ENCODE measurements at regions of chr15 and their contacts with region 1.

Region 1: DNA sequence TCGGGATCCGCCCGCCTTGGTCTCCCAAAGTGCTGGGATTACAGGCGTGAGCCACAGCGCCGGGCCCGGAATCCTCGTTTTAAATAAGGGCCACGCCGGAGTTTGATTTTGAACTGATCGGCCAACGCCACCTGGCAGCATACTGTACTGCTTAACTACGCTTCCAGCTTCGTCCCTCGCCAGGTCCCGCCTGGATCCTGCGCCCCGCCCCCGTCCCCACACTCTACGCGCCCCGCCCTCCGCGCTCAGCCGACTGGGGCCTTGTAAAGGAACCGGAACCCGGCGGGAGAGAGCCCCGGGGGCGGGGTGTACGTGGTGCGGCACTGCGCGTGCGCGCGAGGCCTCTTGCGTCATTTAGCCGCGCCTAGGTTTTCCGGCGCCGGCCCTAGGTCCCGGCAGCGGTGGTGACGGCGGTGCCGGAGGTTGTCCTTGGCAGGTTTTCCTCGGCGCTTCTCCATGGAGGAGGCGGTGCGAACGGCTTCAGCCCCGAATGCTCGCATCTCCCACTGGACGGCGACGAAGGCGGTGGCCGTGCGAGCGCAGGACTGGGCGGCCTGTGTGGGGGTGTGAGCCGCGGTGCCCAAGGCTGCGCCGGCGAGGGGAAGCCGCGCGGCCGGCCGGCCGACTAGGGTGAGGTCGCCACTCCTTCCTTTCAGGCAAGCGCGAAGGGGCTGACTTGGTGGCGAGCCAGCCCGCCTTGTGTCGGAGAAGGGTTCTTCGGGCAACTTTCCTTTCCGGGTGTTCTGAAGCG is at the start of gene NIPA2:
- DNase-seq: peak; percentile 99
- H3K4me3 Mint-ChIP-seq: peak within 1 kb of the TSS; percentile 96
- H3K27ac Mint-ChIP-seq: peak within 1 kb of the TSS; percentile 97
- H3K4me1 Mint-ChIP-seq: peaks cover 19% of the 10 kb centered on the region
- H3K27me3 Mint-ChIP-seq: no peaks in the 10 kb centered on the region
- total RNA-seq, gene NIPA2: 70.5 TPM

Region 2: DNA sequence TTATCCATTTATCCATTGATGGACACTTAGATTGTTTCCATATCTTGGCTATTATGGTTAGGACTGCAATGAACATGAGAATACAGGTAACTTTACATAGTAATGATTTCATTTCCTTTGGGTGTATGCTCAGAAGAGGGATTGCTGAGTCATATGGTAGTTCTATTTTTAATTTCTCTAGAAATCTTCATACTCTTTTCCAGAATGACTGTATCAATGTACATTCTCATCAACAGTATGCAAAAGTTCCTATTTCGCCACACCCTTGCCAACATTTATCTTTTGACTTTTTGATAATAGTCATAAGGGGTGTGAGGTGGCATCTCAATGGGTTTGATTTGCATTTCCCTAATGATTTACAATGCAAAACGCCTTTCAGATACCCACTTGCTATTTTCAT is 58.2 kb before region 1 on chr15:
- CTCF ChIA-PET with region 1: no interaction called
- POLR2A ChIA-PET with region 1: no interaction called
- intact Hi-C with region 1: loop called (anchors 1 kb)
- DNase-seq: no peak
- H3K4me3 Mint-ChIP-seq: no peak overlapping the region
- H3K27ac Mint-ChIP-seq: peak overlapping the region; percentile 38
- H3K4me1 Mint-ChIP-seq: peaks cover 40% of the 10 kb centered on the region
- H3K27me3 Mint-ChIP-seq: no peaks in the 10 kb centered on the region

Region 3: GRCh38 chr15:22786868-22787698 is 51.4 kb before region 1 on chr15:
- CTCF ChIA-PET with region 1: no interaction called
- POLR2A ChIA-PET with region 1: interaction called, 3 read pairs
- intact Hi-C with region 1: loop called (anchors 1 kb)
- DNase-seq: peak; percentile 25
- H3K4me3 Mint-ChIP-seq: peak overlapping the region; percentile 81
- H3K27ac Mint-ChIP-seq: peak overlapping the region; percentile 69
- H3K4me1 Mint-ChIP-seq: peaks cover 40% of the 10 kb centered on the region
- H3K27me3 Mint-ChIP-seq: no peaks in the 10 kb centered on the region

Region 4: DNA sequence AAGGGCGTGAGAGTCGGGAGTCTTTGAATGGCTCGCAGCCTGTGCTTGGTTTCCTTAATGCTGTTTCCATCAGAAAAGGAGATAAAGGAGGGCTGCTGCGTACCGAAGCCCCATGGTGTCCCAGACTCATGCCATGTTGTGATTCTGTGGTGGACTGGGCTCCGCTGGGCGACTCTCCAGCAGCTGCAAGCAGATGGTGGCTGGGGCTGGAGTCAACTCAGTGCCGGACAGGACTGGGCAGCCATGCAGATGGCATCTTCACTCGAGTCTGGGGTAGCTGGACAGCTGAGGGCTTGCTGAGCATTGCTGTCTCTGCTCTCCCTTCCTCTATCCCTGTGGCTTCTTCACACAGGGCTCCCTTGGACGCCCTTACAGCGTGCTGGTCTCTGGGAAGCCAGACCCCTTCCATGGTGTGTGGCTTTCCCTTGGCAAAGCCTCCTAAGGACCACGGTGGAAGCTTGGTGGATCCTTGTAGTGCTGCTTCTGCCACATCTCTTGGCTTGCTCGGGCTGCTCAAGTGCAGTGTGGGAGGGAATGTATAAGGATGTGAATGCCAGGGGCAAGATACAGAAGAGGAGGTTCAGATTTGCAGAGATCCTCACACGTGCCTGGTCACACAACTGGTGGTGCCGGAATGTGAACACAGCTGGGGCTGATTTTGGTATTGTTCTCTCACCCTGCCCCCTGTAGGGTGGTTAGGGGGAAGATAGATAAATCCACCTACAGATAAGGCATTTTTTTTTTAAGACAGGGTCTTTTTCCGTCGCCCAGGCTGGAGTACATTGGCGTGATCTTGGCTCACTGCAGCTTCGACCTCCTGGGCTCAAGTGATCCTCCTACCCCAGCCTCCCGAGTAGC is 43.0 kb before region 1 on chr15:
- CTCF ChIA-PET with region 1: no interaction called
- POLR2A ChIA-PET with region 1: interaction called, 4 read pairs
- intact Hi-C with region 1: loop called (anchors 1 kb)
- DNase-seq: no peak
- H3K4me3 Mint-ChIP-seq: no peak overlapping the region
- H3K27ac Mint-ChIP-seq: peak overlapping the region; percentile 58
- H3K4me1 Mint-ChIP-seq: peaks cover 56% of the 10 kb centered on the region
- H3K27me3 Mint-ChIP-seq: no peaks in the 10 kb centered on the region

Region 5: DNA sequence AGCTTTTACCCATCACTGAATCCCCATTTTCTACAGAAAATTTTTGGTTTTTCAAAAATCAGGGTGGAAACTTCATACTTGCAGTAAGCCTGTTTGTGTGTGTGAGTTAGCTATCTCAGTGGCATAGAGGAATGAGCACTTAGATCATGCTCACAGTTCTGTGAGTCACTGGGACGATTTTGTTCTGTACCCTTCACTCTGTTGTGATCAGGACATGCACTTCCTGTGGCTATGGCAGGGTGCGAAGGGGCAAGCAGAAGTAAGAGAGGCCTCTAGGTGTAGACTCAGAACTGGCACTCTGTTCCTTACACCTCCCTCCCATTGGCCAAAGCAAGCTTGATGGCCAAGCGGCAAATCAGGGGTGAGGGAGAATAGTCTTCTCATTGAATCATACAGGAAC is 11.6 kb after region 1 on chr15:
- CTCF ChIA-PET with region 1: no interaction called
- POLR2A ChIA-PET with region 1: no interaction called
- intact Hi-C with region 1: loop called (anchors 1 kb)
- DNase-seq: peak; percentile 30
- H3K4me3 Mint-ChIP-seq: no peak overlapping the region
- H3K27ac Mint-ChIP-seq: peak overlapping the region; percentile 38
- H3K4me1 Mint-ChIP-seq: peaks cover 42% of the 10 kb centered on the region
- H3K27me3 Mint-ChIP-seq: no peaks in the 10 kb centered on the region

Region 6: GRCh38 chr15:22989576-22990477 is 151.4 kb after region 1 on chr15:
- CTCF ChIA-PET with region 1: no interaction called
- POLR2A ChIA-PET with region 1: no interaction called
- intact Hi-C with region 1: no loop called
- DNase-seq: no peak
- H3K4me3 Mint-ChIP-seq: no peak overlapping the region
- H3K27ac Mint-ChIP-seq: no peak overlapping the region
- H3K4me1 Mint-ChIP-seq: no peaks in the 10 kb centered on the region
- H3K27me3 Mint-ChIP-seq: no peaks in the 10 kb centered on the region

Region 7: DNA sequence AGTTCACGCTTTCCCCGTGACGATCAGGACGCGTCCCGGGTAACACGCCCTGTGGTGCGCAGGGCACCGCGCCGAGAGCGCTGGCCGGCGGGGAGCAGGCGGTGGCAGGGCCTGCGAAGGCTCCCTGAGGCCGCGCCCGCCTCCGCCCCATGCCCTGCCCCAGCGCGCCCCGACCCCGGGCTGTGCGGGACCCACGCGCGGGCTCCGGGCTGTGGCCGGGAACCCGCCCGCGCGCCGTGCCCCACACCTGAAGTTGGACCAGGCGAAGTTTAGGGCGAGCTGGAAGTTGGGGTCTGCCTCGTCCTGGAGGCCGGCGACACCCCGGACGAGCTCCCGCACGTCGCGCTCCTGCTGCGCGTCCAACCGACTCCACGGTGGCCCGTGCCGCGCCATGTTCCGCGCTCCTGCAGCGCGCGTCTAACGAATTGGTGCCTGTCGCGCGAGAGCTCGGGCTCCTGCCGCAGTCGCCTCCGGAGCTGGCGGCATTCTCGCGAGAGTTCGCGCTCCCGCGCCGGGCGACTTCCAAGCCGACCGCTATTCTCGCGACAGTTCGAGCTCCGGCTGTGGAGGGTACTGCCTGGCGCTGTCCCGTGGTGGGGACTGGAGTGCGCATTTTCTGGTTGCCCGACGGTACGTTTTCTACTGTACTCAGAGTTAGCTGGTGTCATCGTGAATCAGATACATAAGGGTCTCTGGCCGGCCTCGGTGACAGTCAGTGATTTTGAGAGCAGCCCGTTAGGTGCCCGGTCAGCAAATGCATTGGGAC is 200.9 kb after region 1 on chr15 and contains the start of gene TUBGCP5:
- CTCF ChIA-PET with region 1: interaction called, 3 read pairs
- POLR2A ChIA-PET with region 1: interaction called, 4 read pairs
- intact Hi-C with region 1: loop called (anchors 1 kb)
- DNase-seq: peak; percentile 99
- H3K4me3 Mint-ChIP-seq: peak within 1 kb of the TSS; percentile 93
- H3K27ac Mint-ChIP-seq: peak within 1 kb of the TSS; percentile 79
- H3K4me1 Mint-ChIP-seq: peaks cover 25% of the 10 kb centered on the region
- H3K27me3 Mint-ChIP-seq: no peaks in the 10 kb centered on the region
- total RNA-seq, gene TUBGCP5: 13.7 to 15.3 TPM